Psoas muscle (tissue), 8 donors: ENCODE measurements at regions of chr18 and their contacts with region 1.

Region 1: GRCh38 chr18:7755753-7756475 is 188.8 kb downstream of the PTPRM start:
- DNase-seq: no peak
- ATAC-seq: peak; percentile 31 to 60 (median 46)
- H3K4me3 ChIP-seq: no peak overlapping the region
- H3K27ac ChIP-seq: no peak overlapping the region
- H3K4me1 ChIP-seq: peaks cover 51% of the 10 kb centered on the region
- H3K27me3 ChIP-seq: no peaks in the 10 kb centered on the region
- CTCF ChIP-seq: peak; percentile 37

Region 2: GRCh38 chr18:7592305-7593071 is 163.4 kb before region 1 on chr18:
- intact Hi-C with region 1: loop called in 1 of 2 experiments (anchors 5 kb)
- DNase-seq: no peak
- ATAC-seq: peak; percentile 30 to 61 (median 56)
- H3K4me3 ChIP-seq: no peak overlapping the region
- H3K27ac ChIP-seq: no peak overlapping the region
- H3K4me1 ChIP-seq: peaks cover 63% of the 10 kb centered on the region
- H3K27me3 ChIP-seq: no peaks in the 10 kb centered on the region
- CTCF ChIP-seq: peak; percentile 17

Region 3: GRCh38 chr18:7696780-7697179 is 59.1 kb before region 1 on chr18:
- intact Hi-C with region 1: loop called in 1 of 2 experiments (anchors 5 kb)
- DNase-seq: no peak
- ATAC-seq: no peak
- H3K4me3 ChIP-seq: no peak overlapping the region
- H3K27ac ChIP-seq: no peak overlapping the region
- H3K4me1 ChIP-seq: peaks cover 3% of the 10 kb centered on the region
- H3K27me3 ChIP-seq: no peaks in the 10 kb centered on the region
- CTCF ChIP-seq: no peak